MCF 10A (cell line): ENCODE measurements at regions of chr9 and their contacts with region 1.

Region 1: DNA sequence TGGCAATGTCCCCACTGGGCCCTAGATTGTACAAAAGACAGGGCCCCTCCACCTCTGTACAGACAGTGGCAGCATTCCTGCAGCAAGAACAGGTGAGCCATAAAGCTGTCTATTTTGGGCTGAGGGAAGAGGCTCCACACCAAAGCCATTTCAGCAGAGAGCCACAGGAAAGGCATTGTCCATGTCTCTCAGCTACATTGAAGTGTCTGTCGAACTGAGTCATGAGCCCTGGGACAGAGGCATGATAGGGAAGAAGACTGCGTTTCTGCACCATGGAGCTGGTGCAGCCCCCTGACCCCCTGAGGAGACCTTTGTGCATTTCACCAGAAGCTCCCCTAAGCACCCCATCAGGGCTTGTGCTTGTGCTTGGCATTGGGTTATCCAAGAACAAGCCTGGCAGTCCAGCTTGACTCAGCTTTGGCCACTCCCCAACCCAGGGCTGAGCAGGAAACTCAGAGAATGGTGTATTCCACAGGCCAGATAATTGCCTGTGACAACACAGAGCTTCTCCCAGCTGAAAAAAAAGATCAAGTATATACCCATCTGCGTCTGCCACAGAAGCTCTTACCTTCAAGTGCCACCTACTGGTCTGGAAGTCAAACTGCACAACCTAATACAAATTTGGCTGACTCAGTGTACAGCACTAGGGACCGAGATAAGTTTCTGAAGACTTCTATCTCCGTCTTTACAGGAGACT is 5.9 kb upstream of the FRMD3 start:
- DNase-seq: peak; percentile 65
- H3K4me3 Mint-ChIP-seq: no peak overlapping the region
- H3K27ac Mint-ChIP-seq: no peak overlapping the region
- H3K4me1 Mint-ChIP-seq: peaks cover 5% of the 10 kb centered on the region
- H3K27me3 Mint-ChIP-seq: no peaks in the 10 kb centered on the region
- CTCF ChIP-seq: peak; percentile 40

Region 2: GRCh38 chr9:83199243-83199642 is 344.9 kb before region 1 on chr9:
- CTCF ChIA-PET with region 1: interaction called, 11 read pairs
- POLR2A ChIA-PET with region 1: no interaction called
- intact Hi-C with region 1: loop called (anchors 1 kb)
- DNase-seq: peak; percentile 56
- H3K4me3 Mint-ChIP-seq: no peak overlapping the region
- H3K27ac Mint-ChIP-seq: no peak overlapping the region
- H3K4me1 Mint-ChIP-seq: no peaks in the 10 kb centered on the region
- H3K27me3 Mint-ChIP-seq: no peaks in the 10 kb centered on the region
- CTCF ChIP-seq: peak; percentile 43

Region 3: GRCh38 chr9:83219152-83219923 is 324.8 kb before region 1 on chr9:
- CTCF ChIA-PET with region 1: interaction called, 11 read pairs
- POLR2A ChIA-PET with region 1: no interaction called
- intact Hi-C with region 1: loop called (anchors 1 kb)
- DNase-seq: peak; percentile 82
- H3K4me3 Mint-ChIP-seq: peak overlapping the region; percentile 85
- H3K27ac Mint-ChIP-seq: peak overlapping the region; percentile 56
- H3K4me1 Mint-ChIP-seq: no peaks in the 10 kb centered on the region
- H3K27me3 Mint-ChIP-seq: no peaks in the 10 kb centered on the region
- CTCF ChIP-seq: peak; percentile 27

Region 4: GRCh38 chr9:83521411-83521810 is 22.7 kb before region 1 on chr9:
- CTCF ChIA-PET with region 1: interaction called, 11 read pairs
- POLR2A ChIA-PET with region 1: no interaction called
- intact Hi-C with region 1: no loop called
- DNase-seq: no peak
- H3K4me3 Mint-ChIP-seq: no peak overlapping the region
- H3K27ac Mint-ChIP-seq: no peak overlapping the region
- H3K4me1 Mint-ChIP-seq: no peaks in the 10 kb centered on the region
- H3K27me3 Mint-ChIP-seq: peaks cover 10% of the 10 kb centered on the region
- CTCF ChIP-seq: no peak

Region 5: DNA sequence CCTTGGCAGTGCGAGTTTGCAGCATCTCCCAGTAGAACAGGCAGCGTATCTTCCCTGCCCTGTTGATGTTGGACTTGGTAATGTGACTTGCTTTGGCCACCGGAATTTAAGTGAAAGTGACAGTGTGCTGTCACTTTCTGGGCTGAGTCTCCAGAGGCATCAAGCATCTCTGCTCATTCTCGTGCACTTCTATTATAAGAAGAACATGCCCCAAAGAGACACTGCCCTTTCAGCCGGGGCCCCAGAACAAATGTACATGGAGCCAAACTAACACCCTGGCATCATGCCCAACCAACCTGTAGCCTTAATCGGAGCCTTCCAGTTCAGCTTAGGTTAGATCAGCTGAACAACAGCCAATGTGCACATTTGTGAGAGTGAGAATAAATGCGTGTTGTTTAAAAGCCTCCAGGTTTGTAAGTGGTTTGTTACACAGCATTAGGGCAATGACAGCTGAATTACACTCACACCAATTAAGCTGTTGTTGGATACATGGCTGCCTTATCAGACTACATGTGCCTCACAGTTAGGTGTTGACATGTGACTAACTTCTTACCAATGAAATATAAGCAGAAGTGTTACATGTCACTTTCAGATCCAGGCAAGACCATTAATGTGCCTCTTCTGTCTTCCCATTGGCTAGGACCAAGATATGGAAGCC is 16.1 kb after region 1 on chr9:
- CTCF ChIA-PET with region 1: interaction called, 15 read pairs
- POLR2A ChIA-PET with region 1: no interaction called
- intact Hi-C with region 1: no loop called
- DNase-seq: no peak
- H3K4me3 Mint-ChIP-seq: no peak overlapping the region
- H3K27ac Mint-ChIP-seq: no peak overlapping the region
- H3K4me1 Mint-ChIP-seq: no peaks in the 10 kb centered on the region
- H3K27me3 Mint-ChIP-seq: no peaks in the 10 kb centered on the region
- CTCF ChIP-seq: no peak